Lower leg skin (tissue), 4 donors: ENCODE measurements at regions of chr6 and their contacts with region 1.

Region 1: DNA sequence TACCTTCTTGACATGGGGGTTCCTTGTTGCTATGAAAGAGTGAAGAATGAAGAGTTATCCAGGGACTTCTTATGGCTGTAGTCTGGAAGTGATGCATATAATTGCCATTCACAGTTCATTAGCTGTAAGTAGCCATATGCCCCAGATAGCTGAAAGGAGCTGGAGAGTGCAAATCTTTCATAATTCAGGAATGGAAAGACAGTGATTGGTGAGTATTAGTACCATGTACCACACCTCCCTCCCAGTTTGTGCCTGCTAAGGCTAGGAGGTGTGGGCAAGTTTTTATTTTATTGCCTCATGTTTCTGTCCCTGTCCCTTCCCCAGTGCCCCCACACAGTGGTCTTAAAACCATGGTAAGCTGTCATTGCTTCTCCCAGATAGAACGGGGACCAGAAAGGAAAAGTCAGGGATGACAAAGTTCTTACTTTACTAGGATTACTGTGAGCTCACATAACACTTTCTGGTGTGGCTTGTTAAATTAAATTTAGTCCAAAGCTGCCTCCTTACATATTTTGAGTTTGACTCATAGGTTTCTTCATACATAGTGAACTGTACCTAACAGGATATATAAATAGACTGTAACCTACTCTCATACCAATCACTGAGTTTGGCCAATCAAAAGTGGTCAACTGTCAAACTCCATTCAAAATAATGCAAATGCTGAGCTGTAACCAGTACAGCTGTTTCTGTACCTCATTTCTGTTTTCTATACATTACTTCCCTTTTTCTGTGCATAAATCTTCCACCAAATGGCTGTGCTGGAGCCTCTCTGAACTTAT is 119.4 kb downstream of the RFPL4B start:
- DNase-seq: no peak
- H3K4me3 ChIP-seq: no peak overlapping the region
- CTCF ChIP-seq: no peak
- POLR2A ChIP-seq: no peak

Region 2: DNA sequence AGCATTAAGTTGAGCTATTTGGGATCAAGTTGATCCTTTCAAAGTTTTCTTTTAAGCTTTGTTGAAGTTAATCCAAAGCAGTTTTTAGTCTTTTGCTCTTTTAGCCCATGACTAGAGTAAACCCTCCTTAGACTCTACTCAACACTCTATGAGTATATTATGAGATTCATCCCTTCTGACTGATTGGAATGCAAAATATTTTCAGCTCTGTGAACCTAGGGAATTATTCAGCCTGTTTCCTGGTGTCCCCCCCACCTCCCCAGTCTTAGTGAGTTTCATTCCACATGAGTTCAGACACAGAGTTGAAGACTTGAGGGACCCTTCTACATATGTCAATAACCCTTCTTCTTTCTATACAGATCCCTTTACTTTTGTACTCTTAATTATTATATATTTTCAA is 294.3 kb after region 1 on chr6:
- intact Hi-C with region 1: loop called (anchors 10 kb)
- DNase-seq: no peak
- H3K4me3 ChIP-seq: no peak overlapping the region
- CTCF ChIP-seq: no peak
- POLR2A ChIP-seq: no peak